ENCODE measurements at regions of chr10 and their contacts with region 1.

Region 1: DNA sequence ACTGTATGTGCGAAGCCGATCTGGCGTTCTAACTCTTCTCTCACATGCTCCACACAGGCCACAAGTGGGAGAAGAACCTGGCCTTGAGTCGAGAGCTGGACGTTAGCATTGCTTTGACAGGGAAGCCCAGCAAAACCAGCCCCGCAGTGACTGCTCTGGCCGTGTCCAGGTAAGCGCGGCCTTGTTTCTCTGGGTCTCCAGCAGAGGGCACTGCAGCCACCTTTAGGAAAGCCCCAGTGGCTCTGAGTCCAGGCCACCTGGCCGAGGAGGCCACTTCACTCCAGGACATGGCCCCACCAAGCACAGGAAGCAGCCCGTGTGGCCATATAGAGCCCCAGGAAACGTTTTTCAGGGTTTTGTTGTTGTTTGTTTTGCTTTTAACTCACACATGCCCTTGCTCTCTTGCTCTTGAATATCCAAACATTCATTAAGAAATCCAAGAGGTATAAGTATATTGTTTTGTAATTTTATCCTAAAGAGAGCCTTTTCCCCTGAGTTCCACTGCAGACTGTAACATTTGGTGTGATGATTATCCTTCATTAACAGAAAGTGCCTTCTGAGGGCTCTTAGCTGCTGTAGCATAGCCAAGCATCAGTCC is 41.8 kb upstream of the LRRC18 start:
- DNase-seq: peak in 4 of 5 donors; percentile 60 to 68 (median 61)
- ATAC-seq: peak; percentile 69 to 93 (median 86)
- H3K4me3 ChIP-seq: no peak overlapping the region
- H3K27ac ChIP-seq: no peak overlapping the region
- H3K4me1 ChIP-seq: peaks cover 0 to 6% (median 4%) of the 10 kb centered on the region in 12 donors
- H3K27me3 ChIP-seq: no peaks in the 10 kb centered on the region
- CTCF ChIP-seq: peak; percentile 79 to 93 (median 88)
- POLR2A ChIP-seq: no peak

Region 2: DNA sequence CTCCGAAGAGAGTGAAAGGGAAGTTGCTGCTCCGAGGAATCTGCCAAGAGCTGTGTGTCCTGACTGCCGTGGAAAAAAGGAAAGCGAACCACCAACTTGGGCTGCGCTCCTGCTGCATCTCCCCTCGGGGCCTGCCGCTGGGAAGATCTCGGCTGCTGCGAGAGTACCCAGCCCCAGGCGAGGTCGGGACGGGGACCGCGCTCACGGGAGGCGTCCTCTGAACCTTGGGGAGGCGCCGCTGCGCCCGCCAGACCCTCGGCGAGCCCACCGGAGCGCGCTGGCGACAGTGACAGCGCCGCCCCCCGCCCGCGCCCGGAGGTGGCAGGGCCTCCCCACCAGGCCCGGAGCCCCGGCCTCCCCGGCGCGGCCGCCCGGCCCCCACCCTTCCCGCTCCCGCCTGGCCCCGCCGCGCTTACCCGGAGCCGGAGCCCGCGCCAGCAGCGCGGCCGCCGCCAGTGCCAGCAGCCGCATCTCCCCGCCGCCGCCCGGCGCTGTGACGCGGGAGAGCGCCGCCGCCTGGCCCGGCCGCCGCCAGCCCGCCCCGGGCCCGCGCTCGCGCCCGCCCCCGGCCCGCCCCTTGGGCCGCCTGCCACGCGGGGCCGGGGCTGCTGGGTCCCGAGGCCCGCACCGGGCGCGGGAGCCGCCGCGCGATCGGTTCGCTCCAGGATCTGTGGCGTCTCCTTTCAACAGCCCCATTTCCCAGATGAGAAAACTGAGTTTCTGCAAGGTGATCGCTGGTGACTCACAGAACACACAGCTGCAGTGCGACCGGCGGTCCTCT is 133.8 kb after region 1 on chr10 and contains the start of gene VSTM4:
- intact Hi-C with region 1: loop called in 4 of 10 experiments (anchors 5 kb)
- DNase-seq: peak; percentile 50 to 74 (median 55)
- ATAC-seq: peak; percentile 12 to 66 (median 42)
- H3K4me3 ChIP-seq: peak within 1 kb of the TSS; percentile 37 to 94 (median 71)
- H3K27ac ChIP-seq: peak within 1 kb of the TSS; percentile 27 to 92 (median 83)
- H3K4me1 ChIP-seq: peaks cover 0 to 62% (median 28%) of the 10 kb centered on the region in 12 donors
- H3K27me3 ChIP-seq: peaks cover 0 to 6% (median 0%) of the 10 kb centered on the region in 9 donors
- CTCF ChIP-seq: peak in 5 of 12 donors; percentile 11 to 43 (median 16)
- POLR2A ChIP-seq: peak in 1 of 2 donors; percentile 9
- total RNA-seq, gene VSTM4: 8.6 to 22.1 (median 15.8) TPM

Region 3: GRCh38 chr10:49300140-49300974 is 318.9 kb after region 1 on chr10:
- intact Hi-C with region 1: loop called in 1 of 10 experiments (anchors 5 kb)
- DNase-seq: peak; percentile 77 to 89 (median 79)
- ATAC-seq: peak; percentile 71 to 82 (median 80)
- H3K4me3 ChIP-seq: peak overlapping the region; percentile 34 to 71 (median 58)
- H3K27ac ChIP-seq: peak overlapping the region; percentile 80 to 99 (median 94)
- H3K4me1 ChIP-seq: peaks cover 0 to 88% (median 62%) of the 10 kb centered on the region in 12 donors
- H3K27me3 ChIP-seq: no peaks in the 10 kb centered on the region
- CTCF ChIP-seq: peak in 5 of 12 donors; percentile 11 to 34 (median 20)
- POLR2A ChIP-seq: no peak

Region 4: DNA sequence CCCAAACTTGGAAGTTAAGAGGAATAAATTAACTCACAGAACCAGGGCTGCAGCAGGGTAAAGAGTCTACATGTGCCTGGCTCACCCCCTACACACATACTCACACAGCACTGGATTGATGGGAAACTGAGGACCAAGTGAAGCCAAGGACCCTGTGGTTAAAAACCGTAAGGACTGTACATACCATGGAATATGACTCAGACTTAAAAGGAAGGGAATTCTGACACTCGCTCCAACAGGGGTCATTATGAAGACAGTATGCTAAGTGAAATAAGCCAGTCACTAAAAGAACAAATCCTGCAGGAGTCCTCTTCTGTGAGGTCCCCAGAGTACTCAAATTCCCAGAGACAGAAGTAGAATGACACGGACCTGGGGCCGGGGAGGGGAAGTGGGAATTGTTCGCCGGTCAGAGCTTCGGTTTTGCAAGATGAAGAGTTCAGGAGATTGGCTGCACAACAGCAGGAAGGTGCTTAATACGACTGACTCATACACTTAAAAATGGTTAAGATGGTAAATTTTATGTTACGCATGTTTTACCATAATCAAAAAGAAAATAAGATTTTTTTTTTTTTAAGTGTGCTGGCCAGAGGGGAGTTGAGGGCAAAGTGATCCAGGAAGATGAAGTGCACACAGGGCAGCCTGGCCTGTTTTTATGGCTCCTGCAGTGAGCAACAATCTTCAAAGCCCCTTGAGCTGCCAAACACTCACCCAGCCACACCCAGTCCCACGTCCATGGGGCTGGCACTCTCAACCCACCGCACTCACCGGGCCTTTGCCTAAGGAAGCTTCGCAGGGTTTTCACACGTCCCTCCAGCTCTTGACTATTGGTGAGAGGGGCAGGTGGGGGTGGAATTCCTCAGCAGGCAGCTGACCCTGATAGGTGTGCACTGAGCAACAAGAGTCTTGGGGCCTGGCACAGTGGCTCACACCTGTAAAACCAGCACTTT is 388.1 kb after region 1 on chr10:
- intact Hi-C with region 1: loop called in 3 of 10 experiments (anchors 5 to 10 kb)
- DNase-seq: no peak
- ATAC-seq: no peak
- H3K4me3 ChIP-seq: no peak overlapping the region
- H3K27ac ChIP-seq: no peak overlapping the region
- H3K4me1 ChIP-seq: no peaks in the 10 kb centered on the region
- H3K27me3 ChIP-seq: peaks cover 0 to 6% (median 0%) of the 10 kb centered on the region in 9 donors
- CTCF ChIP-seq: no peak
- POLR2A ChIP-seq: no peak

Region 5: DNA sequence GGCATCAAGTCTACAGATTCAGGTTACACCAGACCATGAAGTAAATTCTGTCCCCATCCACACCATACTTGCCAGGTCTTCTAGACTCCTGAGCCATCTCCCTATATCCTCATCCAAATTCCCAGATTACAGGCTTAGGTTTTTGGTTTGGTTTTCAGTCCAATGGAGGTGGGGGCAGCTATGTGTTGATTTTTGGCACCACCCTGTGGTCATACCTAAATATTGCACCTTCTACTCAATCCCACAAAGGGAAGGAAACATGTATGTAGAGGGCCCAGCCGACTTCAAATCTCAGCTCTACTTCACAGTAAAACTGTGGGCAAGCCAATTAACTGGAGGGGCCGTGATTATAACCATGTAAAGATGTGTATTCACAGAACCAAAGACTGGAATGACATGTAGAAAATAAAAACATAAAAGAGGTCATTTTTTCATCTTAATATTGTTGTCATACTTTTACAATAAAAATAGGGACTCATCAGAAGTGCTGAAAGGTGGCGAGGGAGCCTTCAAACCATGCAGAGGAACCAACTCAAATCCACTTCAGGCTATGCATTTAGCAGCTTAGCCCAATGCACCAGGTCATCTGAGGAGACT is 537.7 kb after region 1 on chr10:
- intact Hi-C with region 1: loop called in 9 of 10 experiments (anchors 2 to 10 kb)
- DNase-seq: peak in 1 of 5 donors; percentile 13
- ATAC-seq: peak; percentile 52 to 73 (median 62)
- H3K4me3 ChIP-seq: no peak overlapping the region
- H3K27ac ChIP-seq: no peak overlapping the region
- H3K4me1 ChIP-seq: peaks cover 0 to 33% (median 7%) of the 10 kb centered on the region in 12 donors
- H3K27me3 ChIP-seq: no peaks in the 10 kb centered on the region
- CTCF ChIP-seq: peak; percentile 55 to 74 (median 66)
- POLR2A ChIP-seq: no peak